ENCODE measurements at regions of chr3 and their contacts with region 1.

Region 1: GRCh38 chr3:45154641-45155147 is 8.5 kb upstream of the CDCP1 start:
- DNase-seq: no peak
- ATAC-seq: no peak
- H3K4me3 ChIP-seq: no peak overlapping the region
- H3K4me3 Mint-ChIP-seq: no peak overlapping the region
- H3K27ac ChIP-seq: no peak overlapping the region
- H3K27ac Mint-ChIP-seq: no peak overlapping the region
- H3K4me1 ChIP-seq: no peaks in the 10 kb centered on the region
- H3K4me1 Mint-ChIP-seq: no peaks in the 10 kb centered on the region
- H3K27me3 ChIP-seq: no peaks in the 10 kb centered on the region
- H3K27me3 Mint-ChIP-seq: no peaks in the 10 kb centered on the region
- CTCF ChIP-seq: no peak

Region 2: GRCh38 chr3:45137656-45138181 is 17.0 kb before region 1 on chr3:
- CTCF ChIA-PET with region 1: no interaction called
- POLR2A ChIA-PET with region 1: no interaction called
- intact Hi-C with region 1: loop called in 1 of 2 experiments (anchors 1 kb)
- DNase-seq: no peak
- ATAC-seq: no peak
- H3K4me3 ChIP-seq: no peak overlapping the region
- H3K4me3 Mint-ChIP-seq: no peak overlapping the region
- H3K27ac ChIP-seq: no peak overlapping the region
- H3K27ac Mint-ChIP-seq: no peak overlapping the region
- H3K4me1 ChIP-seq: no peaks in the 10 kb centered on the region
- H3K4me1 Mint-ChIP-seq: peaks cover 24% of the 10 kb centered on the region
- H3K27me3 ChIP-seq: peaks cover 5 to 7% of the 10 kb centered on the region in 2 experiments
- H3K27me3 Mint-ChIP-seq: peaks cover 20% of the 10 kb centered on the region
- CTCF ChIP-seq: no peak

Region 3: GRCh38 chr3:45309876-45310275 is 155.2 kb after region 1 on chr3:
- CTCF ChIA-PET with region 1: no interaction called
- POLR2A ChIA-PET with region 1: no interaction called
- intact Hi-C with region 1: no loop called
- DNase-seq: no peak
- ATAC-seq: no peak
- H3K4me3 ChIP-seq: no peak overlapping the region
- H3K4me3 Mint-ChIP-seq: no peak overlapping the region
- H3K27ac ChIP-seq: no peak overlapping the region
- H3K27ac Mint-ChIP-seq: no peak overlapping the region
- H3K4me1 ChIP-seq: no peaks in the 10 kb centered on the region
- H3K4me1 Mint-ChIP-seq: no peaks in the 10 kb centered on the region
- H3K27me3 ChIP-seq: peaks cover 3 to 10% of the 10 kb centered on the region in 2 experiments
- H3K27me3 Mint-ChIP-seq: peaks cover 31% of the 10 kb centered on the region
- CTCF ChIP-seq: no peak

Region 4: GRCh38 chr3:46019707-46020106 is 865.0 kb after region 1 on chr3:
- CTCF ChIA-PET with region 1: no interaction called
- POLR2A ChIA-PET with region 1: no interaction called
- intact Hi-C with region 1: no loop called
- DNase-seq: no peak
- ATAC-seq: no peak
- H3K4me3 ChIP-seq: no peak overlapping the region
- H3K4me3 Mint-ChIP-seq: no peak overlapping the region
- H3K27ac ChIP-seq: no peak overlapping the region
- H3K27ac Mint-ChIP-seq: no peak overlapping the region
- H3K4me1 ChIP-seq: no peaks in the 10 kb centered on the region
- H3K4me1 Mint-ChIP-seq: peaks cover 8% of the 10 kb centered on the region
- H3K27me3 ChIP-seq: no peaks in the 10 kb centered on the region
- H3K27me3 Mint-ChIP-seq: peaks cover 6% of the 10 kb centered on the region
- CTCF ChIP-seq: no peak